CD8-positive, alpha-beta T cell (primary cell): ENCODE measurements at regions of chr9 and their contacts with region 1.

Region 1: GRCh38 chr9:35116898-35117551 is 1.4 kb upstream of the ATOSB start:
- DNase-seq: peak; percentile 78 to 96 (median 88)
- ATAC-seq: peak; percentile 65
- H3K4me3 ChIP-seq: peak overlapping the region; percentile 64 to 69
- H3K4me3 Mint-ChIP-seq: peak overlapping the region; percentile 94
- H3K27ac ChIP-seq: peak overlapping the region; percentile 64 to 91
- H3K27ac Mint-ChIP-seq: peak overlapping the region; percentile 94
- H3K4me1 ChIP-seq: peaks cover 34% of the 10 kb centered on the region
- H3K4me1 Mint-ChIP-seq: peaks cover 42% of the 10 kb centered on the region
- H3K27me3 ChIP-seq: peaks cover 0 to 2% of the 10 kb centered on the region in 2 experiments
- H3K27me3 Mint-ChIP-seq: peaks cover 2% of the 10 kb centered on the region
- CTCF ChIP-seq: peak; percentile 95

Region 2: GRCh38 chr9:34899535-34900158 is 217.4 kb before region 1 on chr9:
- CTCF ChIA-PET with region 1: interaction called, 4 read pairs
- POLR2A ChIA-PET with region 1: no interaction called
- intact Hi-C with region 1: loop called in 1 of 2 experiments (anchors 1 kb)
- DNase-seq: peak; percentile 64 to 87 (median 80)
- ATAC-seq: peak; percentile 99
- H3K4me3 ChIP-seq: no peak overlapping the region
- H3K4me3 Mint-ChIP-seq: no peak overlapping the region
- H3K27ac ChIP-seq: no peak overlapping the region
- H3K27ac Mint-ChIP-seq: no peak overlapping the region
- H3K4me1 ChIP-seq: no peaks in the 10 kb centered on the region
- H3K4me1 Mint-ChIP-seq: no peaks in the 10 kb centered on the region
- H3K27me3 ChIP-seq: no peaks in the 10 kb centered on the region
- H3K27me3 Mint-ChIP-seq: peaks cover 31% of the 10 kb centered on the region
- CTCF ChIP-seq: peak; percentile 81

Region 3: GRCh38 chr9:35096035-35096849 is 20.8 kb before region 1 on chr9 and contains the start of gene PIGO:
- CTCF ChIA-PET with region 1: interaction called, 19 read pairs
- POLR2A ChIA-PET with region 1: interaction called, 4 read pairs
- intact Hi-C with region 1: loop called in 1 of 2 experiments (anchors 1 kb)
- DNase-seq: peak; percentile 78 to 94 (median 89)
- ATAC-seq: peak; percentile 90
- H3K4me3 ChIP-seq: peak within 1 kb of the TSS; percentile 95 to 99
- H3K4me3 Mint-ChIP-seq: peak within 1 kb of the TSS; percentile 88
- H3K27ac ChIP-seq: peak within 1 kb of the TSS; percentile 95 to 100
- H3K27ac Mint-ChIP-seq: peak within 1 kb of the TSS; percentile 95
- H3K4me1 ChIP-seq: peaks cover 24% of the 10 kb centered on the region
- H3K4me1 Mint-ChIP-seq: peaks cover 32% of the 10 kb centered on the region
- H3K27me3 ChIP-seq: no peaks in the 10 kb centered on the region
- H3K27me3 Mint-ChIP-seq: no peaks in the 10 kb centered on the region
- CTCF ChIP-seq: peak; percentile 75
- total RNA-seq, gene PIGO: 15.1 to 16.4 TPM

Region 4: DNA sequence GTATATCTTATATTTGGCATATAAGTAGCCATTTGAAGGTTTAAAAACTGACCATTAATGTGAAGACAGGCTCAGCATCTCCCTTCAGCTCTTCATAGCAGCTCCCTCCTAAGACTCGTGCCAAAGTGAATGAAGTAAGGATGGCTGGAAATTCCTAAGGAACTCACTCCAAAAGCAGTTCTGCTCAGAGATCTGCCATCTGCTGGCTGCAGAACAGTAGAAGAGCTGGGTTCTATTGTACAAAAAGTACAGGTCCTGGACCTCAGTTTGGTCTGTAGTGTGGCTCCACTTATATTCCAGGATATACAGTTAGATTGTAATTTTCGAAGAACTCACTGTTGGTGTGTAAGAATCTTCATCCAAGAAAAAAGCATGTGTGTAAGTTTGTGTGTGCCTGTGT is 268.0 kb after region 1 on chr9:
- CTCF ChIA-PET with region 1: no interaction called
- POLR2A ChIA-PET with region 1: no interaction called
- intact Hi-C with region 1: loop called in 1 of 2 experiments (anchors 2 kb)
- DNase-seq: no peak
- ATAC-seq: no peak
- H3K4me3 ChIP-seq: no peak overlapping the region
- H3K4me3 Mint-ChIP-seq: no peak overlapping the region
- H3K27ac ChIP-seq: no peak overlapping the region
- H3K27ac Mint-ChIP-seq: no peak overlapping the region
- H3K4me1 ChIP-seq: no peaks in the 10 kb centered on the region
- H3K4me1 Mint-ChIP-seq: no peaks in the 10 kb centered on the region
- H3K27me3 ChIP-seq: no peaks in the 10 kb centered on the region
- H3K27me3 Mint-ChIP-seq: peaks cover 7% of the 10 kb centered on the region
- CTCF ChIP-seq: no peak

Region 5: GRCh38 chr9:35553670-35554543 is 436.9 kb after region 1 on chr9:
- CTCF ChIA-PET with region 1: interaction called, 5 read pairs
- POLR2A ChIA-PET with region 1: no interaction called
- intact Hi-C with region 1: loop called in 1 of 2 experiments (anchors 1 kb)
- DNase-seq: peak in 4 of 9 experiments; percentile 18 to 53 (median 31)
- ATAC-seq: peak; percentile 51
- H3K4me3 ChIP-seq: no peak overlapping the region
- H3K4me3 Mint-ChIP-seq: no peak overlapping the region
- H3K27ac ChIP-seq: no peak overlapping the region
- H3K27ac Mint-ChIP-seq: no peak overlapping the region
- H3K4me1 ChIP-seq: no peaks in the 10 kb centered on the region
- H3K4me1 Mint-ChIP-seq: no peaks in the 10 kb centered on the region
- H3K27me3 ChIP-seq: no peaks in the 10 kb centered on the region
- H3K27me3 Mint-ChIP-seq: peaks cover 2% of the 10 kb centered on the region
- CTCF ChIP-seq: peak; percentile 47

Region 6: DNA sequence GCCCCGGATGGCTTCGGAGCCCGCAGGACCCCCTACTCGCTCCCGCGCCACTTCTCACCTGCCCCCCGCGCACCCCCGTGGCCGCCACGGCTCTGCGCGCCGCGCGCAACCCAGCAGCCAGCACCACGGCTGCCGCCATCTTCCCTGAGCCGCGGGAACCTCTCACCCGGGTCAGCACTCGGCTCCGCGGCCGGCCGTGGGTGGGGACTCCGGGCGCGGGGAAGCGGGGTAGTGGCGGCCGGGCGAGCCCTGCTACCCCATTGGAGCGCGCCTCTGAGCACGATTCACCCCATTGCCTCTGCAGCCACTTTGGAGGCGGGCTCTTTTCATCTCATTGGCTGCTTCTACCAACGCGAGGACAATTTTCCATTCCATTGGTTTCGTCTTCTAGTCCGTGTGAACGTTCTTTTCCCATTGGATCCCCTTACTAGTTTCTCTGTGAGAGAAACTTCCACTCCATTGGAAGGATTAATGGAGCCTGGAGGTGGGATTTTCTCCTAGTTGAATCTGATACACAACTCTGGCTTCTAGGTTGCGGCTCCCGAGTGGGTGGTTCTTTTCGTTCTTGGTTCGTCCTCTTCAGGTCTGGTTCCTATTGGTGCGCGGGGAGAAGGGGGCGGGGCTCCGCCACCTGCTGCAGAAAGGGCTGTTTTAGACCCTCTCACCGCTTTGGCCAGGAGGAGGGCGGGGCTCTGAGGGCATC is 698.0 kb after region 1 on chr9 and contains the start of gene HINT2:
- CTCF ChIA-PET with region 1: no interaction called
- POLR2A ChIA-PET with region 1: no interaction called
- intact Hi-C with region 1: loop called (anchors 5 to 10 kb)
- DNase-seq: peak; percentile 95 to 99 (median 97)
- ATAC-seq: peak; percentile 79
- H3K4me3 ChIP-seq: peak within 1 kb of the TSS; percentile 76 to 96
- H3K4me3 Mint-ChIP-seq: peak within 1 kb of the TSS; percentile 97
- H3K27ac ChIP-seq: peak within 1 kb of the TSS; percentile 74 to 86
- H3K27ac Mint-ChIP-seq: peak within 1 kb of the TSS; percentile 87
- H3K4me1 ChIP-seq: peaks cover 31% of the 10 kb centered on the region
- H3K4me1 Mint-ChIP-seq: peaks cover 36% of the 10 kb centered on the region
- H3K27me3 ChIP-seq: no peaks in the 10 kb centered on the region
- H3K27me3 Mint-ChIP-seq: no peaks in the 10 kb centered on the region
- CTCF ChIP-seq: no peak
- total RNA-seq, gene HINT2: 10.0 to 13.6 TPM